T-cell (primary cell): ENCODE measurements at regions of chr2 and their contacts with region 1.

Region 1: GRCh38 chr2:166944909-166945308 is 56.6 kb downstream of the XIRP2 start:
- DNase-seq: no peak
- ATAC-seq: no peak
- H3K4me3 ChIP-seq: no peak overlapping the region
- H3K4me3 Mint-ChIP-seq: no peak overlapping the region
- H3K27ac ChIP-seq: no peak overlapping the region
- H3K27ac Mint-ChIP-seq: no peak overlapping the region
- H3K4me1 ChIP-seq: no peaks in the 10 kb centered on the region
- H3K4me1 Mint-ChIP-seq: no peaks in the 10 kb centered on the region
- H3K27me3 ChIP-seq: no peaks in the 10 kb centered on the region
- H3K27me3 Mint-ChIP-seq: no peaks in the 10 kb centered on the region

Region 2: DNA sequence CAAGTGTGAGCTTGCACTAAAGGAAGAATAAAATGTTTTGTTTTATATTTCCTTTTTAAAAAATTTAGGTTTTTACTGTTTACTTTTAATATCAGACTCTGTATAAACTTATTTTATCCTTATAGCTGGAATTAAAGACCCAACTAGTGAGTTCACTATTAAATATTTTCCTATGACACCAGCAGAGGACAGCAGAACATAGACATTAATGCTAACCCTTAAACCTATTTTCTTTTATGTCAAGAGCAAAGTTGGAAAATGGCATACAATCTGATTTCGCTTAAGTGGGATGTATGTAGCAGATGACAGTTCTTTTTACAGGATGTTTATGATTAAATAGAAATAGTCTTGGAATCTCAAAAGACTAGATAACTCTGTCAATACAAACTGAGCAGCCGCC is 244.8 kb before region 1 on chr2:
- CTCF ChIA-PET with region 1: no interaction called
- POLR2A ChIA-PET with region 1: no interaction called
- DNase-seq: peak in 1 of 35 experiments; percentile 10
- ATAC-seq: no peak
- H3K4me3 ChIP-seq: no peak overlapping the region
- H3K4me3 Mint-ChIP-seq: no peak overlapping the region
- H3K27ac ChIP-seq: no peak overlapping the region
- H3K27ac Mint-ChIP-seq: no peak overlapping the region
- H3K4me1 ChIP-seq: no peaks in the 10 kb centered on the region
- H3K4me1 Mint-ChIP-seq: no peaks in the 10 kb centered on the region
- H3K27me3 ChIP-seq: no peaks in the 10 kb centered on the region
- H3K27me3 Mint-ChIP-seq: peaks cover 0 to 5% of the 10 kb centered on the region in 2 donors

Region 3: DNA sequence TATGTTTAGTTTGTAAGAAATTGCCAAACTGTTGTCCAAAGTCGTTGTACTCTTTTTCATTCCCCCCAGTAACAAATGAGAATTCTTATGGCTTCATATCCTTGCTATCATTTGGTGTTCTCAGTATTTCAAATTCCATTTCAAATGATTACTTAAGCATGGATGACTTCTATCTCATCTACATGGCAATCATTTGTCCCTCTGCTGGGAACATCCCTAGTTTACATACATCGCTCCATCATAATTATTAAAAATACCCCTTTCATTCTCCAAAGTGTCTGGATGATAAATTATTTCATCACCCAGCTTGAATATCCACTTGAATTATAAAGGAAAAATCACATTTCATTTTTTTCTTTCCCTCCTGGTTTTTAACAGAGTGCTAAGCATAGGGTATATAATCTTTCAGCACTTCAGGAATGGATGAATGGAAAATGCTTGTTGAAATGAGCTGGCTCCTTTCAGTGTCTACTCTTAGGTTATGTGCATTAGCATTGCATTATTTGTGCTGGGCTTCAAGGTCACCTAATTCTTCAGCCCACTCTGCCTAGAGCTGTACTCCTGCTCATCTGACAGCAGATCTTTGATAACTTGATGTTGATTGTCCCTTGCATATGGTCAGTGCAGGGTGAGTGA is 23.5 kb before region 1 on chr2:
- CTCF ChIA-PET with region 1: no interaction called
- POLR2A ChIA-PET with region 1: interaction called in 1 of 2 experiments, 12 read pairs
- DNase-seq: no peak
- ATAC-seq: no peak
- H3K4me3 ChIP-seq: no peak overlapping the region
- H3K4me3 Mint-ChIP-seq: no peak overlapping the region
- H3K27ac ChIP-seq: no peak overlapping the region
- H3K27ac Mint-ChIP-seq: no peak overlapping the region
- H3K4me1 ChIP-seq: no peaks in the 10 kb centered on the region
- H3K4me1 Mint-ChIP-seq: no peaks in the 10 kb centered on the region
- H3K27me3 ChIP-seq: no peaks in the 10 kb centered on the region
- H3K27me3 Mint-ChIP-seq: peaks cover 0 to 4% of the 10 kb centered on the region in 2 donors